CD8-positive, alpha-beta T cell (primary cell): ENCODE measurements at regions of chr14 and their contacts with region 1.

Region 1: GRCh38 chr14:91911474-91912032 is 35.9 kb downstream of the FBLN5 start:
- DNase-seq: peak in 7 of 9 experiments; percentile 11 to 78 (median 60)
- ATAC-seq: peak; percentile 96
- H3K4me3 ChIP-seq: no peak overlapping the region
- H3K4me3 Mint-ChIP-seq: no peak overlapping the region
- H3K27ac ChIP-seq: no peak overlapping the region
- H3K27ac Mint-ChIP-seq: no peak overlapping the region
- H3K4me1 ChIP-seq: peaks cover 5% of the 10 kb centered on the region
- H3K4me1 Mint-ChIP-seq: peaks cover 19% of the 10 kb centered on the region
- H3K27me3 ChIP-seq: no peaks in the 10 kb centered on the region
- H3K27me3 Mint-ChIP-seq: no peaks in the 10 kb centered on the region
- CTCF ChIP-seq: peak; percentile 56

Region 2: GRCh38 chr14:91649930-91650329 is 261.6 kb before region 1 on chr14:
- CTCF ChIA-PET with region 1: interaction called, 41 read pairs
- POLR2A ChIA-PET with region 1: interaction called, 4 read pairs
- intact Hi-C with region 1: loop called in 1 of 2 experiments (anchors 1 kb)
- DNase-seq: peak in 4 of 9 experiments; percentile 20 to 60 (median 36)
- ATAC-seq: peak; percentile 52
- H3K4me3 ChIP-seq: no peak overlapping the region
- H3K4me3 Mint-ChIP-seq: no peak overlapping the region
- H3K27ac ChIP-seq: no peak overlapping the region
- H3K27ac Mint-ChIP-seq: no peak overlapping the region
- H3K4me1 ChIP-seq: no peaks in the 10 kb centered on the region
- H3K4me1 Mint-ChIP-seq: no peaks in the 10 kb centered on the region
- H3K27me3 ChIP-seq: no peaks in the 10 kb centered on the region
- H3K27me3 Mint-ChIP-seq: no peaks in the 10 kb centered on the region
- CTCF ChIP-seq: peak; percentile 64

Region 3: GRCh38 chr14:91796617-91797347 is 114.8 kb before region 1 on chr14:
- CTCF ChIA-PET with region 1: interaction called, 8 read pairs
- POLR2A ChIA-PET with region 1: interaction called, 6 read pairs
- intact Hi-C with region 1: loop called (anchors 5 kb)
- DNase-seq: no peak
- ATAC-seq: no peak
- H3K4me3 ChIP-seq: no peak overlapping the region
- H3K4me3 Mint-ChIP-seq: no peak overlapping the region
- H3K27ac ChIP-seq: no peak overlapping the region
- H3K27ac Mint-ChIP-seq: peak overlapping the region; percentile 80
- H3K4me1 ChIP-seq: no peaks in the 10 kb centered on the region
- H3K4me1 Mint-ChIP-seq: peaks cover 33% of the 10 kb centered on the region
- H3K27me3 ChIP-seq: no peaks in the 10 kb centered on the region
- H3K27me3 Mint-ChIP-seq: no peaks in the 10 kb centered on the region
- CTCF ChIP-seq: no peak

Region 4: GRCh38 chr14:91858215-91858905 is 53.2 kb before region 1 on chr14:
- CTCF ChIA-PET with region 1: interaction called, 14 read pairs
- POLR2A ChIA-PET with region 1: interaction called, 7 read pairs
- intact Hi-C with region 1: loop called in 1 of 2 experiments (anchors 5 kb)
- DNase-seq: peak in 2 of 9 experiments; percentile 32 to 47
- ATAC-seq: peak; percentile 55
- H3K4me3 ChIP-seq: no peak overlapping the region
- H3K4me3 Mint-ChIP-seq: peak overlapping the region; percentile 38
- H3K27ac ChIP-seq: peak overlapping the region in 1 of 2 experiments; percentile 56
- H3K27ac Mint-ChIP-seq: peak overlapping the region; percentile 89
- H3K4me1 ChIP-seq: peaks cover 96% of the 10 kb centered on the region
- H3K4me1 Mint-ChIP-seq: peaks cover 86% of the 10 kb centered on the region
- H3K27me3 ChIP-seq: no peaks in the 10 kb centered on the region
- H3K27me3 Mint-ChIP-seq: no peaks in the 10 kb centered on the region
- CTCF ChIP-seq: no peak

Region 5: DNA sequence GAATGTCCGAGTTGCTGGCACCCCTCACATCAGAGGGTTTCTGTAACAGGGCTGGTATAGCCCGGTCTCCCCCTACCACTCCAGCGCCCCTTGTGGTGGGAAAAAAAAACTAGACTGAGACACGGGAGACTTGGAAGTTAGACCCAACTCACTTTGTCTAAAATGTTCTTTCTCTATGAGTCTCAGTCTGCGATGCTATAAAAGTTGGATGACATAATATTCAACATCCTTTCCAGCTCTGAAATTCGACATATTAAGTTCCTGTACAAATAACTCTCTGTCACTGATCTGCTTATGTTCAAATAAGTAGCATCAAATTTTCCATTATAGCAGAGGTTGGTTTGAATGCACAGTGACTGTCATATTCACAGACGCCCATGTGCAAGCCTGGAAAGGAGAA is 18.5 kb before region 1 on chr14:
- CTCF ChIA-PET with region 1: interaction called, 25 read pairs
- POLR2A ChIA-PET with region 1: interaction called, 8 read pairs
- intact Hi-C with region 1: no loop called
- DNase-seq: peak in 3 of 9 experiments; percentile 36 to 61 (median 53)
- ATAC-seq: peak; percentile 30
- H3K4me3 ChIP-seq: no peak overlapping the region
- H3K4me3 Mint-ChIP-seq: no peak overlapping the region
- H3K27ac ChIP-seq: no peak overlapping the region
- H3K27ac Mint-ChIP-seq: peak overlapping the region; percentile 57
- H3K4me1 ChIP-seq: peaks cover 56% of the 10 kb centered on the region
- H3K4me1 Mint-ChIP-seq: peaks cover 66% of the 10 kb centered on the region
- H3K27me3 ChIP-seq: no peaks in the 10 kb centered on the region
- H3K27me3 Mint-ChIP-seq: no peaks in the 10 kb centered on the region
- CTCF ChIP-seq: peak; percentile 50